ENCODE measurements at regions of chr3 and their contacts with region 1.

Region 1: DNA sequence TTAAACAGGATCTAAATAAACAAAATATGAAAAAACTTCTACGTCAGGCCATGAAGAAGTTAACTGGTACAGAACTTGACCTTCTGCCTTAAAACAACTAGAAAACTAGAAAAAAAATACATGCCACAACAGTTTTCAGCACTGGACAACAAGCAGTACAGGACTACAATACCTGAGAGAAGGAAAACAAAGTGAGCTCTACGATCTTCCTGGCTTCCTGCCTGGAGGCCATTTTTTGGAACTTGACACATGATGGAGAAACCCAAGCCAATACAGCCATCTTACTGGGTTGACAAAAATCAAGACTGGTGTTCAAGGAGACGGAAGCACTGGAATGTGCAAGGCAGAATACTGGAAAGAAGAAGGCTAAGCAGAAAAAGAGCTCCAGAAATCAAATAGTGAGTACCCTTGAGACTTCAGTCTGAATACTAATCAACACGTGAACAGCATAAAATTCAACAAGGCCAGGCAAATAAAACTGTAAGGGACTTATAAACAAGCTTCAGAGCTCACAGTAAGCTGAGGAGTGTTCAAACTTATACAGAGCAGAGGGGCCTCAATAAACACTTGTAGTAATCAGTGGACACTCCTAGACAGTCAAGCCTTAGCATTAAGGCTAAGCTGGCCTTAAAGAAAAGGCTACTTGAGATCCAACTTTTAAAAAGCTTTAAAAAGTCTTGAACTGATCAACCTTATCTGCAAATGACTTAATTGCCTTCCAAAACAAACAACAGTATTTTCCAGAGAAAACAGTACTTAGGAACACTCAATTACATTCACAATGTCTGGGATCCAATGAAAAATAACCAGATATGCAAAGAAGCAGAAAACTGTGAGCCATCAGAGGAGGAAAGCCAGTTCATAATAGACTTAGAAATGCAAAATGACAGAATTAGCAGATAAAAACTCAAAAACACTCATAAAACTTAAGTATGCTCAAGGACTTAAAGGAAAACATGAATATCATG is 63.2 kb downstream of the DLG1 start:
- DNase-seq: no peak
- ATAC-seq: no peak
- H3K4me3 ChIP-seq: no peak overlapping the region
- H3K27ac ChIP-seq: no peak overlapping the region
- H3K4me1 ChIP-seq: no peaks in the 10 kb centered on the region
- H3K27me3 ChIP-seq: no peaks in the 10 kb centered on the region
- CTCF ChIP-seq: no peak

Region 2: GRCh38 chr3:197268294-197268693 is 33.1 kb after region 1 on chr3:
- CTCF ChIA-PET with region 1: no interaction called
- POLR2A ChIA-PET with region 1: no interaction called
- in situ Hi-C with region 1: loop called (anchors 5 kb)
- intact Hi-C with region 1: no loop called
- DNase-seq: no peak
- ATAC-seq: no peak
- H3K4me3 ChIP-seq: no peak overlapping the region
- H3K27ac ChIP-seq: no peak overlapping the region
- H3K4me1 ChIP-seq: no peaks in the 10 kb centered on the region
- H3K27me3 ChIP-seq: no peaks in the 10 kb centered on the region
- CTCF ChIP-seq: no peak

Region 3: GRCh38 chr3:197372047-197372666 is 136.9 kb after region 1 on chr3:
- CTCF ChIA-PET with region 1: no interaction called
- POLR2A ChIA-PET with region 1: no interaction called
- in situ Hi-C with region 1: no loop called
- intact Hi-C with region 1: no loop called
- DNase-seq: peak; percentile 38
- ATAC-seq: no peak
- H3K4me3 ChIP-seq: no peak overlapping the region
- H3K27ac ChIP-seq: no peak overlapping the region
- H3K4me1 ChIP-seq: no peaks in the 10 kb centered on the region
- H3K27me3 ChIP-seq: peaks cover 12% of the 10 kb centered on the region
- CTCF ChIP-seq: no peak

Measured in Panc1 (cell line).